ENCODE measurements at regions of chr2 and their contacts with region 1.

Region 1: DNA sequence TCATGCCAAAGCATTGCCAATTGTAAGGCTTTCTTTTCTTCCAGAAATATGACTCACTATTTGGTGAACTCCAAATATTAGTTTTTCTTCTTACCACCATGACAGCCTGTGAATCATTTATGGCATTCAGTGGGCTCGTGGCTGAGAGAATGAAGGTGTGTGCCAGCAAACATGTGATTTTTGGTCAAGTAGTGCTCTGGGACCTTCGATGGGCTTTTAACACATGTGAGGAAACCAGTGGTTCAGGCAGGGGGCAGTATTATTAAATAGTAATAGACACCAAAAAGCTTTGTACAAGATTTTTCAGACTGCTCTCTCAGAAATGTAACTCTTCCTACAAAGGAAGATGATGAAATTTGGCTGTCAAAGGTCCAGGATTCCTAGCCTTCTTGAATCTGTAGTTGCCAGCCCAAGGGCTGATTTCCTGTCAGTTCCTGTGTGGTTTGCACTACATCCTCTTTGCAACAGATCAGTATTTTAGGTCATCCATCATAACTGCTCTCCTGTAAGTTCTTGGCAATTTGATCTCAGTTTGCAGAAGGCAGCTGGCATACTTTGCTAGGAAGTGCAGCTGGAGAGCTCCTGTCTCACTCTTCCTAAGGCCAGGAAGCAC is 64.3 kb downstream of the BABAM2 start:
- DNase-seq: peak; percentile 81
- ATAC-seq: peak; percentile 86
- H3K4me3 Mint-ChIP-seq: peak overlapping the region; percentile 46
- H3K27ac Mint-ChIP-seq: peak overlapping the region; percentile 86
- H3K4me1 Mint-ChIP-seq: peaks cover 84% of the 10 kb centered on the region
- H3K27me3 Mint-ChIP-seq: no peaks in the 10 kb centered on the region
- CTCF ChIP-seq: no peak

Region 2: GRCh38 chr2:27903649-27904404 is 51.0 kb before region 1 on chr2:
- CTCF ChIA-PET with region 1: interaction called, 3 read pairs
- POLR2A ChIA-PET with region 1: no interaction called
- intact Hi-C with region 1: loop called (anchors 2 kb)
- DNase-seq: peak; percentile 50
- ATAC-seq: peak; percentile 44
- H3K4me3 Mint-ChIP-seq: no peak overlapping the region
- H3K27ac Mint-ChIP-seq: peak overlapping the region; percentile 93
- H3K4me1 Mint-ChIP-seq: peaks cover 77% of the 10 kb centered on the region
- H3K27me3 Mint-ChIP-seq: no peaks in the 10 kb centered on the region
- CTCF ChIP-seq: no peak

Region 3: DNA sequence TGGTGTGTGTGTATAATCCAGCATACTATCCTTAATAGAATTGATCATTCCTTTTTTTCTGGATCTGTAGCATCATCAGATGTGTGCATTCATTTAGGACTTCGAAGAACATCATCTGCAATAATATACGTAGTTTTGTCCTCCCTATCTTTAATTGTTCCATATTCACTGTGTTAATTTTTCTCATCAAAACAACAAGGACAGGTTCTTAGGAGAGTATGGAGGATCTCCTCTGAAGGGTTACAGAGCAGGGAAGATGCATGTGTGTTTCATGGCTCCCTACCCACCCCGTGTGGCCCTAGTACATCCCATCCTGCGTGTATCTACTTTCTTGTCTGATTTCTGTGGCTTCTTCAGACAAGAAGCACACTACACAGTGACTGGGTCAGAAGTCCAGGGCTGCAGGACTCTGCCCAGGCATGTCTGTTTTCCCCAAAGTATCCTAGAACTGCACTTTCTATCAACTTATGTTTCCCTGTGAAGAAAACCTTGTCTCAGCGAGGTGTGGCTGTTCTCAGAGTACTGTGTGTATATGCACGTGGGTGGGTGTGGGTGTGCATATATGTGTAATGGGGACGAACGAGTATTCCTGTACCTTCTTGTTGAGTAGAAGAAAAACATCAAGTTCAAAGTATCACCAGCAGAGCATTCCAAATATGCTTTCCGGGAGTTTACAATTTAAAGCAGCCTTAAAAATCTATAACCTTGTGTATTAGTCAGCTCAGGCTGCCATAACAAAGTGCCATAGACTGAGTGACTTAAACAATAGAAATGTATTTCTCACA is 217.4 kb after region 1 on chr2:
- CTCF ChIA-PET with region 1: no interaction called
- POLR2A ChIA-PET with region 1: no interaction called
- intact Hi-C with region 1: no loop called
- DNase-seq: no peak
- ATAC-seq: no peak
- H3K4me3 Mint-ChIP-seq: no peak overlapping the region
- H3K27ac Mint-ChIP-seq: peak overlapping the region; percentile 25
- H3K4me1 Mint-ChIP-seq: no peaks in the 10 kb centered on the region
- H3K27me3 Mint-ChIP-seq: no peaks in the 10 kb centered on the region
- CTCF ChIP-seq: no peak

Measured in activated CD8-positive, alpha-beta T cell treated with anti-CD3 and anti-CD28 coated beads for 36 hours (primary cell).